ENCODE measurements at regions of chr16 and their contacts with region 1.

Region 1: DNA sequence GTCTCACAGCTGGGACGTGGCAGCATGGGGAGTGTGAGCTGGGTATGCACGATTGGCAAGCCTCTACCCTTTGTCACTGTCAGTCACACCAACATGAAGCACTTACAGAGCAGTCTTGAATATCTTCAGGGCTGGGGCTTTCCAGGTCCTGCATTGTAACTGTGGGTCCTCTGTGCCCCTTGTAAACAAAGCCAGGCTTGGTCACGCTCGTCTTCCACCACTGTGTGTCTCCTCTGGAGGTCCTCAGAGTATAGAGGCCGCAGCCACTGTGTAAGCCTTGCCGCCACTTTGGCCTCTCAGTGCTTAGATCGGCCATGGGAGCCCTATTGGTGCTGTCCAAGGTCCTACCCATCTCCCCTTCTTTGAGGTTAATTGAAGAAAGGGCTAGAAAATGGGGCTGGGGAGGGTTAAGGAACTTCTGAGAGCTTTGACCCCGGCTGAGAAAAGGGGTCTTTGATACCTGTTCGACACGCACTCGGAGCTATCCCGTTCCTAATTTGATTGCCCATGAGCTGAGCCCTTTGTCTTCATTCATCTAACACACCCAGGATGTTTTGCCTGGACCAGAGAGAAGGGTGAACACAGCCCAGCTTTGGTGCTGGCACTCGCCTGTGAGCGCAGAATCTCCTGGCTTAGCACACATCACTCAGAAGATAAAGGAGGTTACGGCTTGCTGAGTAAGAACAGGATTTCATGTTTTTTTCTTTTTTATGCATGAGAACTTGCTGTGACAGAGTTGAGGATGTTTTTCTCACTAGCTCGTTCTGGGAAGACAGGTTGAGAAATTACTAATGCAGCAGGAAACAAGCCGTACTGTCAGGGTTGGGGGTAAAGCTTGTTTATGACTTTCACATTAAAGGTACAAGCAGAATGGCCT is 267.9 kb downstream of the CPPED1 start:
- DNase-seq: no peak
- H3K4me3 ChIP-seq: no peak overlapping the region
- H3K27ac ChIP-seq: peak overlapping the region in 3 of 4 donors; percentile 22 to 81 (median 79)
- H3K4me1 ChIP-seq: peaks cover 10 to 97% (median 30%) of the 10 kb centered on the region in 3 donors
- H3K27me3 ChIP-seq: no peaks in the 10 kb centered on the region
- CTCF ChIP-seq: no peak
- POLR2A ChIP-seq: no peak

Region 2: DNA sequence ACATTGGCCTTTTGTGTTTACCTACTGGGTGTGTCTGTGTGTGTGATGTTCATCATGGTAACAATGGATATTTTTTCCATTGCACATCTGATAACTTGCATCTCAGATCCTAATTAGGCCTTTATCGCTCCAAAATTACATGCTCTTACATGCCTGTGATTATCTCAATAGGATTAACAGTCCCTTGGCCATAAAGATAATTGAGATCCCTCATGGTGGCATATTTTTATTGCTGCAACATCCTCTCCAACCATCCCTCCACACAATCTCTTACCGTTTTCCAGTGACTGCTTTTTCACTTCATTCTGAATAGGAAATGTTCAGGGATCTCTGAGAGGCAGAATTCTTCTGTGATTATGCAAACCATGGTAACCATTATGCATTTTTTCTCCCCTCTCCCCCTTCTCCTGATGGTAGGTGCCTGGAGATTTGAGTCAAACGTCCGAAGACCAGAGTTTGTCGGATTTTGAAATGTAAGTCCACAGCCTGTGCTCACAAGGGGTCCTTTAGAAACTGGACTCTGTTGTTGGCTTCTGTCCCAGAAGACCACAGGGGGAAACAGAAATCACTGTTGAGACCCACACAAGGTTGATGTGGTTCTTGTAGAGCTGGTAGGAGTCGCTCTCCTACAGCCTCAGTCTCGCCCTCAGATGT is 137.6 kb before region 1 on chr16:
- intact Hi-C with region 1: loop called (anchors 5 kb)
- DNase-seq: no peak
- H3K4me3 ChIP-seq: no peak overlapping the region
- H3K27ac ChIP-seq: no peak overlapping the region
- H3K4me1 ChIP-seq: no peaks in the 10 kb centered on the region
- H3K27me3 ChIP-seq: no peaks in the 10 kb centered on the region
- CTCF ChIP-seq: no peak
- POLR2A ChIP-seq: no peak

Region 3: DNA sequence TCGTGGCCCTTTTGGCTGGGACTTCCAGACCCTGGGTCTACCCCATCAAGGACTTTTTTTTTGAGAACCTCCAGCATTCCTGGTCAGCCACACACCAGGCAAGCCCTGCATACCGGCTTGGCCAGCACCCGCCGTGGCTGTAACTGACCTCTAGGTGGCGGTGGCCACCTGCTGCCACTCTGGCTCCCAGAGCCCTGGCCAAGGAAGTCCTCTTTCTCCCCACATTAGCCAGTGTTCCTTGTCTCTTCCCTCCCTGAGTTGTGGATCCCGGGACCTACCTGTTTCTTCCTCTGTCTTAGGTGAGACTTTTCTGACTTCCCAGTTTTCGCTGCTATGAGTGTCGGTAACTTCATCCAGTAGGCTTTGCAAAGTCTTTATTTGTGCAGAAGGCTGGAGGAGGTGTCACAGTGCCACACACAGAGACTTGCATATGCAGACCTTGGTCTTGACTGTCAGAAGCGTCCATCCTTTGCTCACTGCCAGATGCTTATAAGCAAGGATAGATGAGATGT is 80.4 kb before region 1 on chr16:
- intact Hi-C with region 1: no loop called
- DNase-seq: no peak
- H3K4me3 ChIP-seq: no peak overlapping the region
- H3K27ac ChIP-seq: no peak overlapping the region
- H3K4me1 ChIP-seq: no peaks in the 10 kb centered on the region
- H3K27me3 ChIP-seq: no peaks in the 10 kb centered on the region
- CTCF ChIP-seq: peak; percentile 55 to 87 (median 70)
- POLR2A ChIP-seq: no peak